AG04449 (cell line): ENCODE measurements at regions of chr10 and their contacts with region 1.

Region 1: DNA sequence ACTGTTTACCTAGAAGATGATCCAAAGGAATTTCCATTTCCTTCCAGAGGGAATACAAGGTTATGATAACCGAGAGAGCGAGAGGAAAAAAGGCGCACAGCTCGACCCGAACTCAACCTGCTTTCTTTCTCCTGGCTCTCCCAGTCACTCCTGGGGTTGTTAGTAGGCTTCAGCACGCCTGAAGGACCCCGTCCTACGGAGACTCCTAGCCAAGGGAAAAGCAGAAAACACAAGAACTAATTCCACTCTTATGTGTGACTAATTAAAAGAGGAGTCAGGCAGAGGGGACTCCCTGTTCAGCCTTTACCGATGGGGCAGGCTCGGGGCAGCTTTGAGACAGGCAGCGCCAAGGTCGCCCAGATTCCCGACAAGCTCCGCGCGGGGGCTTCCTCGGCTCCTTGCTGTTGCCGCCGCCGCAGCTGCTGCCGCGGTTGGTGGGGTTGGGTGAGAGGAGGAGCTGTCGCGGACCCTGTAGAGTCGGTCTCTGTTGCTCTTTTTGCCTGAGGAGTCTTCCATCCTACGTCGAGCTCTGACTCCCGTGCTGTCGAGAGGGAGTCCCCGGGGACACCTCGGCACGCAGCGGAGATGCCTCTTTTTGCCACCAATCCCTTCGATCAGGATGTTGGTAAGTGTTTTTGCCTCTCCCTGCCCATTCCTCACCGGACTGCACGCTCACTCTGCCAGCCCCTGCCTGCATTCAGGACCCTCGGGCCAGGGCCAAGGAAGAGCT is at the start of gene STAM:
- DNase-seq: peak; percentile 53
- H3K4me3 ChIP-seq: peak within 1 kb of the TSS; percentile 79
- CTCF ChIP-seq: no peak

Region 2: DNA sequence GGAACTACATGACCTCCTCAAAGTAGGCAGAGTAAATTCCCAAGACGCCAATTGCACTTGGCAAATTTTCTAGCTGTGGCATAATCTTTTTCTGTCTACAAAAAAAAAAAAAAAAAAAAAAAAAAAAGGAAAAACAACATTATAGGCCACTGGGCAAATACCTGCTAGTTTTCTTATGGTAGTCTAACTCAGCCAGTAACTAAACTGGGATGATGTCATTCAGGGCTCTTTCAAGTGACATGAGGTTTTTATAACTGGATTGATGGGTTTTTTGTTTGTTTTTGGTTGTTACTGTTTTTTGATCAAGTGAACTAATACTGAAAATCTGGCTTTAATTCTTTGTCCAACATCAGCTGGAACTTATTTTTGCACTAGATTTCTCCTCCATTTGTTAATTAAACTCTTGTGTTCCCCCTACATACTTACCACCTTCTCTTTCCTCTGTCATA is 423.2 kb before region 1 on chr10:
- CTCF ChIA-PET with region 1: no interaction called
- POLR2A ChIA-PET with region 1: no interaction called
- DNase-seq: no peak
- H3K4me3 ChIP-seq: no peak overlapping the region
- CTCF ChIP-seq: no peak

Region 3: DNA sequence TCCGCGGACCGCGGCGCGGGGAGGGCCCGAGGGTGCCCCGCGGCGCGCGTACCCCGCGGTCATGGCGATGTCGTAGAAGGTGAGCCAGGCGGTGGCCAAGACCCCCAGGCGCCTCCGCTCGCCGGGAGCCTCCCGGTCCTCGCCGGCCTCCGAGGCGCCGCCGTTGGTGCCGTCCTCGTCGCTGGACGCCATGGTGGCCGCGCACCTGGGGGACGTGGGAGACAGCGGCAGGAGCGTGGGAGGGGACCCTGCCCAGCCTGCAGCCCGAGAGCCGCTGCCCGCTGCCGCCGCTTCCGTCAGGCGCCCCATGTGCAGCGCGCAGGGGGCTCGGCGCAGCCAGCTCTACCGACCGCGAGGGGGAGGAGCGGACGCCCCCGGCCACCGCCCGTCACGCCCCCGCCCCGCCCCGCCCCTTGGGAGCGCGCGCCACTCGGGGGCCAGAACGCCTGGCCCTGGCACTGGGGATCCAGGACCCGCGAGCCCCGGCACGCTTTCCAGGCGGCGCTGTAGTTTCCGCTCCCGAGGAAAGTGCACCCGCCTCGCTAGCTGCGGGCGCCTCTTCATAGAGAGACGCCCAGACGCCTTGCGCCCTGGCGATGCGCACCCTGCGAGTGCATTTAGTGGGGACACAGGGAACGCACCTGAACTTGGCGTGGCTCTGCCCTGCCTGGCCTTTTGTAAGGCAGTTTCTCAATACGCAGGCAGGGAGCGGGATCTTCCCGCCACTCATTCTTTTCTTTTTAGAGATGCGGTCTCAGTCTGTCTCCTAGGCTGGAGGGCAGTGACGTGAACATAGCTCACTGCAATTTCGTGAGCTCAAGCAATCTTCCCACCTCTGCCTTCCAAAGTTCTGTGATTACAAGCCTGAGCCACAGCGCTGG is 26.6 kb before region 1 on chr10 and contains the start of gene HACD1:
- CTCF ChIA-PET with region 1: interaction called, 7 read pairs
- POLR2A ChIA-PET with region 1: interaction called, 30 read pairs
- DNase-seq: no peak
- H3K4me3 ChIP-seq: peak within 1 kb of the TSS; percentile 74
- CTCF ChIP-seq: peak; percentile 49

Region 4: GRCh38 chr10:17673456-17674061 is 29.6 kb after region 1 on chr10:
- CTCF ChIA-PET with region 1: no interaction called
- POLR2A ChIA-PET with region 1: interaction called, 10 read pairs
- DNase-seq: peak; percentile 84
- H3K4me3 ChIP-seq: no peak overlapping the region
- CTCF ChIP-seq: no peak

Region 5: GRCh38 chr10:17742918-17743317 is 99.0 kb after region 1 on chr10:
- CTCF ChIA-PET with region 1: interaction called, 12 read pairs
- POLR2A ChIA-PET with region 1: no interaction called
- DNase-seq: no peak
- H3K4me3 ChIP-seq: no peak overlapping the region
- CTCF ChIP-seq: peak; percentile 70

Region 6: DNA sequence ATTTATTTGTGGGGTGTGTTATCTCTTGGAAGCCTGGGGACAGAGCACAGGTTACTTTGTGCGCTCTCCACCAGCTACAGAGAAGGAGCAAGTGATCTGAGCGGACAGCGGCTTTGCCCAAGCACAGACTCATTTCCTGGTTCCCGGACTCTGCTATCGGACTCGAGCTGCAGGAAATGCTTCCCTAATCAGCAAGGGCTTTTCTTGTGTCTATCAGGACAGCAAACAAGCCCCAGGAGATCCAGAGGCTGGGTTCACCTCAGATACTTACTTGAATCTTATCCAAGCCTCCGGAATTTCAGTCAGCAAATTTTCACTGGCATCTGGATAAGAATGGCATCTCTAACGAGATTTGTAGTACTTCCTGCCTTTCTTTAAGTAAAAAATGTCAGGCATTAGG is 193.0 kb after region 1 on chr10:
- CTCF ChIA-PET with region 1: no interaction called
- POLR2A ChIA-PET with region 1: no interaction called
- DNase-seq: no peak
- H3K4me3 ChIP-seq: peak overlapping the region; percentile 31
- CTCF ChIP-seq: no peak